Heart right ventricle (tissue), 16 donors: ENCODE measurements at regions of chr9 and their contacts with region 1.

Region 1: GRCh38 chr9:107489687-107490605 is at the start of gene KLF4:
- DNase-seq: peak; percentile 90 to 94
- ATAC-seq: peak; percentile 76 to 94 (median 84)
- H3K4me3 ChIP-seq: peak within 1 kb of the TSS; percentile 60 to 94 (median 80)
- H3K27ac ChIP-seq: peak within 1 kb of the TSS; percentile 86 to 98 (median 96)
- H3K4me1 ChIP-seq: peaks cover 3 to 64% (median 19%) of the 10 kb centered on the region in 9 donors
- H3K27me3 ChIP-seq: peaks cover 0 to 48% (median 0%) of the 10 kb centered on the region in 7 donors
- CTCF ChIP-seq: peak in 1 of 9 donors; percentile 16
- total RNA-seq, gene KLF4: 16.7 to 62.2 (median 31.0) TPM

Region 2: GRCh38 chr9:107439991-107440456 is 49.9 kb before region 1 on chr9:
- intact Hi-C with region 1: no loop called
- DNase-seq: no peak
- ATAC-seq: no peak
- H3K4me3 ChIP-seq: no peak overlapping the region
- H3K27ac ChIP-seq: no peak overlapping the region
- H3K4me1 ChIP-seq: no peaks in the 10 kb centered on the region
- H3K27me3 ChIP-seq: no peaks in the 10 kb centered on the region
- CTCF ChIP-seq: no peak

Region 3: GRCh38 chr9:107548048-107548800 is 58.3 kb after region 1 on chr9:
- intact Hi-C with region 1: loop called in 1 of 10 experiments (anchors 5 kb)
- DNase-seq: peak in 1 of 2 donors; percentile 49
- ATAC-seq: peak in 7 of 8 donors; percentile 75 to 94 (median 91)
- H3K4me3 ChIP-seq: peak overlapping the region in 3 of 10 donors; percentile 29 to 30 (median 29)
- H3K27ac ChIP-seq: peak overlapping the region; percentile 41 to 85 (median 66)
- H3K4me1 ChIP-seq: peaks cover 0 to 21% (median 13%) of the 10 kb centered on the region in 9 donors
- H3K27me3 ChIP-seq: no peaks in the 10 kb centered on the region
- CTCF ChIP-seq: no peak

Region 4: GRCh38 chr9:107624234-107624960 is 134.5 kb after region 1 on chr9:
- intact Hi-C with region 1: loop called in 1 of 10 experiments (anchors 10 kb)
- DNase-seq: no peak
- ATAC-seq: no peak
- H3K4me3 ChIP-seq: no peak overlapping the region
- H3K27ac ChIP-seq: no peak overlapping the region
- H3K4me1 ChIP-seq: peaks cover 0 to 5% (median 0%) of the 10 kb centered on the region in 9 donors
- H3K27me3 ChIP-seq: no peaks in the 10 kb centered on the region
- CTCF ChIP-seq: no peak

Region 5: DNA sequence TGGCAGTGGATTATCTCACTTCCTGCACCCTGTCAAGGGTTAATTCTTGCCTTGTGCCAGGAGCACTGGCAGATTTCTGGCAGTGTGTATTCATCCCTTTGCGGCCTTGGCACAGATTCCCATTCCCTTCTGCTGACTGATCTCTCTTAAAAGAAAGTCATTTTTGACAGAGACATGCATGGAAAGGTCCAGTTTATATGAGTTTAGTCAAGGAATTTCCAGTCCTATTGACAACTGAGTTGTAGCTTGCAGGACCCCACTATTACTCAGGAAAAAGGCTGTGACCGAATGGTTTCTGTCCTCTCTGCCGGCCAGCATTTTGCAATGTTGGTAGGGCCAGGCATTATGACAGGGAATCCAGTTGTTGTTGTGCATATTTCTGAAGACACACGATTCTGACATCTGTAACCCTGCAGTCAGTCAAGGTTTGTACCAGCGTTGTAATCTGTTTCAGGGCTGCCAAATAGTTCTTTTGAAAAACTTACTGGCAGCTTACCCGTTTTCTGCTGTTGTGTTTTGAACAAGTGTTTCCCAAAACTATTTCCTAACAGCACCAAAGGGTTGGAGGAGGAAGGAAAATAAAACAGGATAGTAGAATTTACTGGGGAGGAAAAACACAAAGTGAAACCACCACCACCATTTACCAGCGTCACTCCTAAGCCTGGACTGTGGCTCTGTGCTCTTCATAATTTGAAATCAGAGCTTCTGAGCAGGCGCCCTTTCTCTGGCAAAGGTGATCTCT is 243.0 kb after region 1 on chr9:
- intact Hi-C with region 1: loop called in 3 of 10 experiments (anchors 5 to 10 kb)
- DNase-seq: peak in 1 of 2 donors; percentile 49
- ATAC-seq: peak; percentile 50 to 81 (median 68)
- H3K4me3 ChIP-seq: peak overlapping the region in 8 of 10 donors; percentile 0 to 38 (median 18)
- H3K27ac ChIP-seq: peak overlapping the region; percentile 63 to 95 (median 84)
- H3K4me1 ChIP-seq: peaks cover 3 to 42% (median 28%) of the 10 kb centered on the region in 9 donors
- H3K27me3 ChIP-seq: no peaks in the 10 kb centered on the region
- CTCF ChIP-seq: no peak

Region 6: DNA sequence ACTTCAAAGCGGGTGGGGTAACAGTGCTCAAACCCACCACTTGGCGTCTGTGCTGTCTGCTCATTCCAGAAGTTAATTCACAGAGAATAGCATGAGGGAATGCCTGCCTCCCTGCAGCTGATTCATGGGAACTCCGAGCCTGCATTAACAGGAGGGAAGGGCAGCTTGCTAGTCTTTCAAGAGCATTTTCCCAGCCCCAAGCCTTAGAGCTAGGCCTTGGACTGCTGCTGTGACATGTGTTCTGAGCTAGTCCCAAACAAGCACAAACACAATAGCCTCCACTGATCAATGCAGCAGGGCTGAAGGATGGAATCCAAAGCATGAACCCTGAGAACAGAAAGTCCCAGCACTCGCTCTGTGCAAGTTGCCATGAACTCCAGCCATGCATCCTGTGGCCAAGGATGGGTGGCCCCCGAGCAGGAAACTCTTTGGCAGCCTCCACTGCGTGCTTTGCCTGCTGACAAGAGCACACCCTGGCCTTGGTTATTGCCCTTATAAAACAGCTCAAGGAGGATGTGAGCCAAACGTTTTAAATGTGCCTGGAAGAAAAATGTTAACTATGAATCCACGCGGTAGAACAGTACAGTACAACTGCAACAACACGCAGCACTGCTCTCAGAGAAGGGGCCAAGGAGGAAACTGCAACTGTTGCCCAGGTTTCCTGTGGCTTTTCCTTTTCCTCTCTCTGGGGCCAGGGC is 652.7 kb after region 1 on chr9:
- intact Hi-C with region 1: loop called in 6 of 10 experiments (anchors 2 to 10 kb)
- DNase-seq: peak; percentile 72 to 76
- ATAC-seq: peak; percentile 95 to 99 (median 98)
- H3K4me3 ChIP-seq: no peak overlapping the region
- H3K27ac ChIP-seq: peak overlapping the region; percentile 39 to 88 (median 84)
- H3K4me1 ChIP-seq: peaks cover 8 to 29% (median 21%) of the 10 kb centered on the region in 9 donors
- H3K27me3 ChIP-seq: no peaks in the 10 kb centered on the region
- CTCF ChIP-seq: peak in 2 of 9 donors; percentile 10 to 22

Region 7: GRCh38 chr9:108565651-108566378 is 1075.9 kb after region 1 on chr9:
- intact Hi-C with region 1: loop called in 3 of 10 experiments (anchors 5 to 10 kb)
- DNase-seq: peak in 1 of 2 donors; percentile 47
- ATAC-seq: peak; percentile 87 to 94 (median 92)
- H3K4me3 ChIP-seq: no peak overlapping the region
- H3K27ac ChIP-seq: no peak overlapping the region
- H3K4me1 ChIP-seq: peaks cover 0 to 5% (median 0%) of the 10 kb centered on the region in 9 donors
- H3K27me3 ChIP-seq: peaks cover 0 to 8% (median 0%) of the 10 kb centered on the region in 7 donors
- CTCF ChIP-seq: peak; percentile 70 to 93 (median 86)